CD4-positive, alpha-beta memory T cell (primary cell): ENCODE measurements at regions of chr6 and their contacts with region 1.

Region 1: GRCh38 chr6:136792410-136793262 is at the start of gene MAP3K5:
- DNase-seq: peak; percentile 94 to 95 (median 94)
- H3K4me3 ChIP-seq: peak within 1 kb of the TSS; percentile 68 to 100
- H3K4me3 Mint-ChIP-seq: peak within 1 kb of the TSS; percentile 94 to 100 (median 97)
- H3K27ac ChIP-seq: peak within 1 kb of the TSS; percentile 99
- H3K27ac Mint-ChIP-seq: peak within 1 kb of the TSS; percentile 93 to 98 (median 97)
- H3K4me1 ChIP-seq: peaks cover 41% of the 10 kb centered on the region
- H3K4me1 Mint-ChIP-seq: peaks cover 22 to 49% (median 27%) of the 10 kb centered on the region in 4 donors
- H3K27me3 ChIP-seq: no peaks in the 10 kb centered on the region
- H3K27me3 Mint-ChIP-seq: no peaks in the 10 kb centered on the region
- total RNA-seq, gene MAP3K5: 31.4 to 31.7 TPM

Region 2: DNA sequence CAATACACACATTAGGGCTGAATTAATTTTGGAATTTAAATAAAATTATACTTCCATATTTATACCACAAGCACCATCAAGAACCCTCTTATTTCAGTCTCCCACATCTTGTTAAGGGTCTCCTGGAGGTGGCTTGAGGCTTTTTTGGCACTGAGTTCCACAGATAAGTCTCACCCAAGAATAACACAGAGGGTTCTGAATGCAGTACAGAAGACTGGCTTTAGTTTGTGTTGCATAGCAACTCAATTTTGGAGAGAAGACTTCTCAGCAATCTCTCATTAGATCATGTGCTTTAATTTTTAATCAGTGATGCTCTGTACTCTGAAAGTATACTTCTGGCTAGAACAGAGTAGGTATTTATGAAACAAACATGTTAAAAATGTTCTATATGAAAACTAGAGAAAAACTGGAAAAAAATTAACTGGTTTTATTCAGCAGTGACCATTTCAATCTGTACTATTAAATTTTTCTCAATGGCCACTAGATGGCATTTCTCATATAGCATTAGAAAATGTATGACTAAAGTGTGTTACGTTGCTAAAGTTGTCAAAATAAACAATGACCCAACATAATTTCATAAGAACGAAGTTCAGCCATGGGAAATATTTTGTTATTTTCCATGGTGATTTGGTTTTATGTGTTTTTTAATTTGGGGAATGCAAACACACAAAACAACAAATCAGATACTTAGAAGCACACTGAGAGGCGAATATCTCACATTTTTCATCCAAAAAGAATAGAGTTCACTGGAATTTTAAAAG is 209.7 kb before region 1 on chr6:
- CTCF ChIA-PET with region 1: interaction called, 7 read pairs
- POLR2A ChIA-PET with region 1: no interaction called
- intact Hi-C with region 1: loop called (anchors 1 kb)
- DNase-seq: peak in 1 of 5 donors; percentile 3
- H3K4me3 ChIP-seq: no peak overlapping the region
- H3K4me3 Mint-ChIP-seq: no peak overlapping the region
- H3K27ac ChIP-seq: no peak overlapping the region
- H3K27ac Mint-ChIP-seq: peak overlapping the region in 1 of 7 donors; percentile 36
- H3K4me1 ChIP-seq: no peaks in the 10 kb centered on the region
- H3K4me1 Mint-ChIP-seq: peaks cover 0 to 1% (median under 1%) of the 10 kb centered on the region in 4 donors
- H3K27me3 ChIP-seq: no peaks in the 10 kb centered on the region
- H3K27me3 Mint-ChIP-seq: no peaks in the 10 kb centered on the region

Region 3: DNA sequence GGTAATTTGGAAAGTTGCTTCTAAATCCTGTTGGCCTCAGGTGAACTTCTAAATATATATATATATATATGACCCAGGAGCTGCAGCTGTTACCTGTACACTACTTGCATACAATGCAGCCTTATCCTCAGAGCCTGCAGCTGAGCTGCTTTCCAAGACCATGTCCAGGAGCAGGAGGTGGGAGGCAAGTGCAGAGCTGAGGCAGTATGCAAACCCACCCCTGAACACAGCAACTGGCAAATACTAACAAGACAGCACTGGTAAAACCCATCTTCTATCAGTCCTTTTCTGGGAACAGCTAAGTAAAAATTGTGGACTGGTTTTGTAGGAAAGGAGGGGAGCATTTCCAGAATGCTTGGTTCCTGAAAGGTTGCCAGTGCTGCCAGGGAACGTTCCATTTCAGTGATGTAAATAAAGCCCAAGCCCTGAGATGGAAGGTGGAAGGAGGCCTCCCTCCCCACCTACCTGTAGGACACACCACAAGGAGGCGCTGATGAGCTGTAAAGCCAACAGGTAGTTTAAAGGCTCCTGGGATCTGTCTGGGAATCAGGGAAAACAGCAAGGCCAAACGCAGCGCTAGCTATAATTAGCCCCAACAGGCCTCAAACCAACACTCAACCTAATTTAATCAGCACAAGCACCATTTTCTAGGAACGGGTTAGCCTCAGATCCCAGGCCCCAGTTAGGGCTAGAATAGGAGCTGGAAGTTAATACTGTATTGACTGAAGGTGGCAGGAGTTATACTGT is 148.6 kb before region 1 on chr6:
- CTCF ChIA-PET with region 1: interaction called, 747 read pairs
- POLR2A ChIA-PET with region 1: interaction called, 198 read pairs
- intact Hi-C with region 1: loop called (anchors 1 kb)
- DNase-seq: peak; percentile 68 to 76 (median 70)
- H3K4me3 ChIP-seq: no peak overlapping the region
- H3K4me3 Mint-ChIP-seq: no peak overlapping the region
- H3K27ac ChIP-seq: peak overlapping the region; percentile 4
- H3K27ac Mint-ChIP-seq: peak overlapping the region; percentile 30 to 75 (median 61)
- H3K4me1 ChIP-seq: peaks cover 19% of the 10 kb centered on the region
- H3K4me1 Mint-ChIP-seq: peaks cover 0 to 5% (median 4%) of the 10 kb centered on the region in 4 donors
- H3K27me3 ChIP-seq: no peaks in the 10 kb centered on the region
- H3K27me3 Mint-ChIP-seq: no peaks in the 10 kb centered on the region

Region 4: DNA sequence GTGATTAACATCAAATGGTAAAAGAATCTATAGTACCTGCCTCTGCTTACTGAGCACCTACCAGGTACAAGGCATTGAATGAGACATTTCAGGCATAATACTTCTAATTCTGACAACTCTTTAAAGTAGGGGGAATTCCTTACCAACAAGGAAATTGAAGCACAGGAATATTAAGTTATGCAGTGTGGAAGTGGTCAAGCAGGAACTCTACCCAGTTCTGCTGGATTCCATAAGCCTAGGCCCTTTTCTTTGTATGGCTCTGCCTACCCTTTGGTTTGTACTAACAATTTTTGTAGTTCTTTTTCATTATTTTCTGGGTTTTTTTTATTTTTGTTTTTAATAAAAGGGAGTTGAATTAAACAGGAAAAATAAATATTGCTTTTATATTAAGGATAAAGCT is 114.8 kb before region 1 on chr6:
- CTCF ChIA-PET with region 1: interaction called, 16 read pairs
- POLR2A ChIA-PET with region 1: interaction called, 4 read pairs
- intact Hi-C with region 1: no loop called
- DNase-seq: no peak
- H3K4me3 ChIP-seq: no peak overlapping the region
- H3K4me3 Mint-ChIP-seq: no peak overlapping the region
- H3K27ac ChIP-seq: no peak overlapping the region
- H3K27ac Mint-ChIP-seq: no peak overlapping the region
- H3K4me1 ChIP-seq: no peaks in the 10 kb centered on the region
- H3K4me1 Mint-ChIP-seq: peaks cover 0 to 11% (median 7%) of the 10 kb centered on the region in 4 donors
- H3K27me3 ChIP-seq: no peaks in the 10 kb centered on the region
- H3K27me3 Mint-ChIP-seq: no peaks in the 10 kb centered on the region

Region 5: DNA sequence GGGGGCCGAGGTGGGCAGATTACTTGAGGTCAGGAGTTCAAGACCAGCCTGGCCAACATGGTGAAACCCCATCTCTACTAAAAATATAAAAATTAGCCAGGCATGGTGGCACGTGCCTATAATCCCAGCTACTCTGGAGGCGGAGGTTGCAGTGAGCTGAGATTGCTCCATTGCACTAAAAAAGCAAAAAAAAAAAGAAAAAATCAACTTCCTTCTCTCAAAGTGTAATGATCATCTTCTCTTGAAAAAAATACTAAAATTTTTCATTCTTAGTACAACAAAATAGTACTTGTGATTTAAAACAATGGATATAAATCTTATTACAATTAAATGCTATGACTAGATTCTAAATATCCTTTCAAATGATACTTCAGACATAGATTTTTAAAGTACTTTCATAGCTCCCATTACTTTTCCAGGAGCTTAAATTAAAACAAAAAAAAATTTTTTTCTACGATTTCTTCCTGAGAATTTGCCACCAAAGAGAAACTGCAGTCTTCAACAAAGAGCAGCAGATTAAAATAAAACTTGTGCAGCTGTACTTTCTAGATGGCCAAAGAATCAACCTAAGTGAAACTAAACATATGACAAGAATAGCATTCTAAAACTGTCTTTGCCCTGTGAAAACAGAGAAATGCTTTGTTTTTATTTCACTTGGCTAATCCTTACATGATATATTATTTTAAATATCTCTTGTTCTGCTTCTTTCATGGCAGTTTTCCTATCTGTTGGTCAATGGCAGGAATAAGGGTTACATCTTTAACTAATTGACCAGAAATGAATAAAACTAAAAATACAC is 75.5 kb before region 1 on chr6:
- CTCF ChIA-PET with region 1: interaction called, 139 read pairs
- POLR2A ChIA-PET with region 1: interaction called, 24 read pairs
- intact Hi-C with region 1: no loop called
- DNase-seq: no peak
- H3K4me3 ChIP-seq: no peak overlapping the region
- H3K4me3 Mint-ChIP-seq: no peak overlapping the region
- H3K27ac ChIP-seq: no peak overlapping the region
- H3K27ac Mint-ChIP-seq: peak overlapping the region in 2 of 7 donors; percentile 36 to 68
- H3K4me1 ChIP-seq: peaks cover 35% of the 10 kb centered on the region
- H3K4me1 Mint-ChIP-seq: peaks cover 35 to 48% (median 42%) of the 10 kb centered on the region in 4 donors
- H3K27me3 ChIP-seq: no peaks in the 10 kb centered on the region
- H3K27me3 Mint-ChIP-seq: no peaks in the 10 kb centered on the region

Region 6: GRCh38 chr6:136751522-136751956 is 41.1 kb before region 1 on chr6:
- CTCF ChIA-PET with region 1: interaction called, 156 read pairs
- POLR2A ChIA-PET with region 1: interaction called, 249 read pairs
- intact Hi-C with region 1: loop called (anchors 1 kb)
- DNase-seq: peak; percentile 42 to 76 (median 62)
- H3K4me3 ChIP-seq: peak overlapping the region in 1 of 2 donors; percentile 23
- H3K4me3 Mint-ChIP-seq: peak overlapping the region; percentile 59 to 91 (median 75)
- H3K27ac ChIP-seq: peak overlapping the region; percentile 51
- H3K27ac Mint-ChIP-seq: peak overlapping the region; percentile 79 to 97 (median 91)
- H3K4me1 ChIP-seq: peaks cover 90% of the 10 kb centered on the region
- H3K4me1 Mint-ChIP-seq: peaks cover 66 to 94% (median 83%) of the 10 kb centered on the region in 4 donors
- H3K27me3 ChIP-seq: no peaks in the 10 kb centered on the region
- H3K27me3 Mint-ChIP-seq: no peaks in the 10 kb centered on the region

Region 7: GRCh38 chr6:136803608-136804007 is 11.0 kb after region 1 on chr6:
- CTCF ChIA-PET with region 1: interaction called, 13 read pairs
- POLR2A ChIA-PET with region 1: interaction called, 3 read pairs
- intact Hi-C with region 1: no loop called
- DNase-seq: no peak
- H3K4me3 ChIP-seq: no peak overlapping the region
- H3K4me3 Mint-ChIP-seq: no peak overlapping the region
- H3K27ac ChIP-seq: no peak overlapping the region
- H3K27ac Mint-ChIP-seq: no peak overlapping the region
- H3K4me1 ChIP-seq: no peaks in the 10 kb centered on the region
- H3K4me1 Mint-ChIP-seq: no peaks in the 10 kb centered on the region
- H3K27me3 ChIP-seq: no peaks in the 10 kb centered on the region
- H3K27me3 Mint-ChIP-seq: peaks cover 1 to 4% of the 10 kb centered on the region in 2 donors